ENCODE measurements at regions of chr14 and their contacts with region 1.

Region 1: GRCh38 chr14:76647697-76648298 is 113.5 kb upstream of the VASH1 start:
- DNase-seq: peak; percentile 65
- H3K4me3 ChIP-seq: no peak overlapping the region
- H3K27ac ChIP-seq: no peak overlapping the region
- H3K4me1 ChIP-seq: no peaks in the 10 kb centered on the region
- CTCF ChIP-seq: peak; percentile 86

Region 2: DNA sequence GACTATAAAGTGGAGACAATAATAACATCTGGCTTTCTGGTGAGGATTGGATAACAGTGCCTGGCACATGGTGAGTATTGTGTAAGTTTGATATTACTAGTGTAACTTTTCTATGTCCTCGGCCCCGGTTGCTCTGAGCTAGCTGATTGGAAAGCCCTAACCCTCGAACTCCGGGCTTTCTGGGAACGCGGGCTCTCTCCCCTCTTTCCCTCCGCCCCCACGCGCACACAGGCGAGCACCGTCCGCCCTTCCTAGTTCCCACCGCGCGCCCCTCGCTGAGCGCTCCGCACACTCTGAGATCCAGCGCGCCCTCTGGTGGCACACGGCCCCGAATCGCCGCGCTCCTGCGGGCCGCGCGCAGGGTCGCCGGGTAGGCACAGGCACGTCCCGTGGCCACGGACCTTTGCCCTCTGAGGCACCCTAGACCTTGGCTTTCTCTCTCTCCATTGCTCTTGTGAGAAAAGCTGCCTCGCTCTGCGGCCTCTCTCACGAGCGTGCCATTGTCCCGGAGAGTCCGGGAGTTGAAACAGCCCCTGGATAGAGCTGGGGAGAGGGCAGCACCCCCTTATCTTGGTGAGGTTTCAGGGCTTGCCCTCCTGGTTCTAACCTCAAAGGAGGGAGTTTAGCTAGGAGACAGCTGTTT is 295.0 kb before region 1 on chr14:
- CTCF ChIA-PET with region 1: no interaction called
- POLR2A ChIA-PET with region 1: no interaction called
- intact Hi-C with region 1: no loop called
- DNase-seq: peak; percentile 7
- H3K4me3 ChIP-seq: no peak overlapping the region
- H3K27ac ChIP-seq: no peak overlapping the region
- H3K4me1 ChIP-seq: no peaks in the 10 kb centered on the region
- CTCF ChIP-seq: peak; percentile 73

Region 3: DNA sequence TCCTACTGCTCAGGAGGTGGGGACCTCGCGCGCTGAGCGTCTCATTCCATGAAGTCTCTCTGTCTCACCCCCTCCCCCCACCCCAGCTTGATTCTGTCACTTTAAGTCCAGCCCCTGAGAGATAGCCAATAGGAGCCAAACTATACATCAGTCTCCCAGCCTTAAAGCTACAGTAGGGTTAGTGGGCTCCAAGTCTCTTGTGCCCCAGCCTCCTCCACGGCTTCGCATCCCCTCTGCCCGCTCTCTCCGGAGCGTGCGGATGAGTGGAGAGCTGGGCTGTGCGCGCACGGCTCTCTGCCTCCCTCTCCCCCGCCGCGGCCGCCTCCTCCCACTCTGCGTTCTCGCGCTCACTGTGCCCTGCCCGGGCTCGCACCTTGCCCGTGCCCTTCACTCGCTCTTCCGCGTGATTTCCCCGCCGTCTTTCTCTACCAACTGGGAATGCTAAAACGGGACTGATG is 271.8 kb before region 1 on chr14 and contains the start of gene ESRRB:
- CTCF ChIA-PET with region 1: interaction called, 18 read pairs
- POLR2A ChIA-PET with region 1: no interaction called
- intact Hi-C with region 1: no loop called
- DNase-seq: no peak
- H3K4me3 ChIP-seq: no peak within 1 kb of the TSS
- H3K27ac ChIP-seq: no peak within 1 kb of the TSS
- H3K4me1 ChIP-seq: no peaks in the 10 kb centered on the region
- CTCF ChIP-seq: no peak
- total RNA-seq, gene ESRRB: 0.47 TPM in 1 of 2 replicates, not detected in the other

Region 4: GRCh38 chr14:76456200-76456599 is 191.6 kb before region 1 on chr14:
- CTCF ChIA-PET with region 1: no interaction called
- POLR2A ChIA-PET with region 1: no interaction called
- intact Hi-C with region 1: loop called (anchors 1 kb)
- DNase-seq: peak; percentile 49
- H3K4me3 ChIP-seq: no peak overlapping the region
- H3K27ac ChIP-seq: no peak overlapping the region
- H3K4me1 ChIP-seq: no peaks in the 10 kb centered on the region
- CTCF ChIP-seq: peak; percentile 79

Region 5: GRCh38 chr14:76633571-76633970 is 14.2 kb before region 1 on chr14:
- CTCF ChIA-PET with region 1: no interaction called
- POLR2A ChIA-PET with region 1: no interaction called
- intact Hi-C with region 1: no loop called
- DNase-seq: no peak
- H3K4me3 ChIP-seq: no peak overlapping the region
- H3K27ac ChIP-seq: no peak overlapping the region
- H3K4me1 ChIP-seq: no peaks in the 10 kb centered on the region
- CTCF ChIP-seq: no peak

Region 6: GRCh38 chr14:76677534-76678145 is 29.8 kb after region 1 on chr14:
- CTCF ChIA-PET with region 1: no interaction called
- POLR2A ChIA-PET with region 1: no interaction called
- intact Hi-C with region 1: no loop called
- DNase-seq: no peak
- H3K4me3 ChIP-seq: no peak overlapping the region
- H3K27ac ChIP-seq: no peak overlapping the region
- H3K4me1 ChIP-seq: no peaks in the 10 kb centered on the region
- CTCF ChIP-seq: no peak

Measured in OCI-LY7 (cell line).